BJ (cell line): ENCODE measurements at regions of chr17 and their contacts with region 1.

Region 1: GRCh38 chr17:42322382-42323267 is 34.3 kb downstream of the STAT5A start:
- DNase-seq: peak; percentile 56
- H3K4me3 ChIP-seq: no peak overlapping the region
- H3K27me3 ChIP-seq: no peaks in the 10 kb centered on the region
- CTCF ChIP-seq: peak; percentile 99

Region 2: GRCh38 chr17:42120770-42121769 is 201.6 kb before region 1 on chr17 and contains the start of gene KAT2A:
- CTCF ChIA-PET with region 1: interaction called, 3 read pairs
- POLR2A ChIA-PET with region 1: interaction called, 10 read pairs
- DNase-seq: no peak
- H3K4me3 ChIP-seq: peak within 1 kb of the TSS; percentile 69
- H3K27me3 ChIP-seq: no peaks in the 10 kb centered on the region
- CTCF ChIP-seq: no peak
- polyA plus RNA-seq, gene KAT2A: 18.2 and 25.2 TPM in 2 replicates

Region 3: DNA sequence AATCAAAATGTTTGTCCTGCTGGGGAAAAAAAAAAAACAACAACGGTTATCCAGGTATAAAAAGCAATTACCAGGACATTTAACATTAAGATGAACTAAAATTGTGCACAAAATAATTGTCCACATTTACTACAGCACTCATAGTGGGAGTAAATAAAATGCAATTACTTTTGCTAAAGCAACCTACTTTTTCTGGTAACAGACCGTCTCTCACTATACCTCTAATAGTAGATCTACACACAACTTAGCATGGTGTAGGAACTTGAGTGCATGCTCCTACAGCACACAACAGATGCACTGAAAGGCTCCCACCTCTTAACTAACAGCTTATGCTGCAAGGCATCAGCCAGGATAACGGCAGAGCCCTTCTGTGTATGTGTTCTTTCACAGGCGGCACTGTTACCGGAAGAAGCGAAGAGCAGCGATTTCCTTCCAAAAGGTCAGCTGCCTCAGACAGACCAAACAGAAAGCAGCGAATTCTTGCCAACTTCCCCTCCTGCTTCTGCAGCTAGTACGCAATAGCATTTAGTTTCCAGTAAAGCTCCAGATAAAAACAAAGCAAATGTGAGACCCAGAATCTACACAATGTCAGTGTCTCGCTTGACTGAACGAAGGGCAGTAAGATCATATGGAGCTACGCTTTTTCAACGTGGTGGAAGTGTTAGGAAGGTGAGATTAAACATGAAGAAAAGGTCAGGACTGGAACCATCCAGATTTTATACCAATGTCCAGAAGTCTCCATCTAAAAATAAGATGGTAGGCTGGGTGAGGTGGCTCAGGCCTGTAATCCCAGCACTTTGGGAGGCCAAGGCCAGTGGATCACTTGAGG is 74.1 kb before region 1 on chr17:
- CTCF ChIA-PET with region 1: no interaction called
- POLR2A ChIA-PET with region 1: no interaction called
- DNase-seq: no peak
- H3K4me3 ChIP-seq: peak overlapping the region; percentile 18; the same call in 1 of the 2 replicates
- H3K27me3 ChIP-seq: no peaks in the 10 kb centered on the region
- CTCF ChIP-seq: no peak

Region 4: GRCh38 chr17:42405963-42406495 is 83.4 kb after region 1 on chr17:
- CTCF ChIA-PET with region 1: interaction called, 23 read pairs
- POLR2A ChIA-PET with region 1: no interaction called
- DNase-seq: no peak
- H3K4me3 ChIP-seq: no peak overlapping the region
- H3K27me3 ChIP-seq: no peaks in the 10 kb centered on the region
- CTCF ChIP-seq: peak; percentile 79

Region 5: GRCh38 chr17:42517516-42517915 is 194.9 kb after region 1 on chr17:
- CTCF ChIA-PET with region 1: interaction called, 90 read pairs
- POLR2A ChIA-PET with region 1: no interaction called
- DNase-seq: peak; percentile 57
- H3K4me3 ChIP-seq: no peak overlapping the region
- H3K27me3 ChIP-seq: no peaks in the 10 kb centered on the region
- CTCF ChIP-seq: peak; percentile 96

Region 6: GRCh38 chr17:42667123-42667951 is 344.7 kb after region 1 on chr17:
- CTCF ChIA-PET with region 1: no interaction called
- POLR2A ChIA-PET with region 1: interaction called, 15 read pairs
- DNase-seq: no peak
- H3K4me3 ChIP-seq: no peak overlapping the region
- H3K27me3 ChIP-seq: no peaks in the 10 kb centered on the region
- CTCF ChIP-seq: no peak